ENCODE measurements at regions of chr12 and their contacts with region 1.

Region 1: GRCh38 chr12:109432841-109433304 is 44.2 kb downstream of the KCTD10 start:
- DNase-seq: peak; percentile 88 to 90 (median 89)
- H3K4me3 ChIP-seq: no peak overlapping the region
- H3K27ac ChIP-seq: no peak overlapping the region
- H3K4me1 ChIP-seq: peaks cover 0 to 5% (median 0%) of the 10 kb centered on the region in 3 donors
- H3K27me3 ChIP-seq: no peaks in the 10 kb centered on the region
- CTCF ChIP-seq: peak; percentile 78

Region 2: DNA sequence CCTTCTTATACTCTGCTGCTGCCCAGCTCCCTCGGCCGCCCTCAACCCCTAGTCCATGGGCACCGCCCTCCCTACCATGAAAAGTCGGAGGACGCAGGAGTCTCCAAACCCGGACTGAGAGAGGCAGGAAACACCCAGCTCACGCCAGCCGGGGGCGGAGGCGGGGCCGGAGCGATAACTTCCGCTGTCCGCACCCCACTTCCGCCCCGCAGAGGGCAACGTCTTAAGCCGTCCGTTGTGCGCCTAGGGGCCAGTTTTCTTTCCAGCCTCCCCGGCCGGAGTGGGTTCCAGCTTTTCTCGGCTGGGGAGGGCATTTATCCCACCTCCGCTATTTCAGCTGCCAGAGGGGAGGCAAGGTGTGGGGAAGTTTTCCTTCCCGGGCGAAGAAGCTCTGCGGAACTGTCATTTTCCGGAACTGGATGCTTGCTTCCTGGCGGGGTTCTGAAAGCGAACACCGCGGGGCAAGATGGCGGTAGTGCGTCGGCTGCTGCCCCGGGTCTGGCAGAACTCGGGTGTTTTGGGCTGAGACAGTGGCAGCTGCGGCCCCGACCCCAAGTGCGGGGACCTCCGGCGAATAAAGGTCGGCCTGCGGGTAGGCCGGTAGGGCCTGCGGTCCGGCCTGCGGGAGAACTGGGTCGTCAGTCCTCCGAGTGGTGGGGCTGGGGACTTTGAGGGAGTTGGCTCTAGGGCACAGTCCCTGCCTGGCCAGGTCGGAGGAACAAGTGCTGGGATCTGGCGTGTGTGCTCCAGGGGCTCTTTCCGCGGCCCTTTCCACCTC is 44.5 kb after region 1 on chr12 and contains the starts of genes KCTD10 and UBE3B:
- intact Hi-C with region 1: loop called (anchors 5 kb)
- DNase-seq: peak; percentile 89 to 96 (median 94)
- H3K4me3 ChIP-seq: peak within 1 kb of the TSS; percentile 99
- H3K27ac ChIP-seq: peak within 1 kb of the TSS; percentile 90 to 99
- H3K4me1 ChIP-seq: peaks cover 0 to 20% (median 9%) of the 10 kb centered on the region in 3 donors
- H3K27me3 ChIP-seq: no peaks in the 10 kb centered on the region
- CTCF ChIP-seq: peak; percentile 15
- total RNA-seq, gene KCTD10: 72.1 TPM
- total RNA-seq, gene UBE3B: 44.3 TPM

Region 3: GRCh38 chr12:110028323-110028722 is 595.5 kb after region 1 on chr12:
- intact Hi-C with region 1: no loop called
- DNase-seq: no peak
- H3K4me3 ChIP-seq: no peak overlapping the region
- H3K27ac ChIP-seq: no peak overlapping the region
- H3K4me1 ChIP-seq: no peaks in the 10 kb centered on the region
- H3K27me3 ChIP-seq: no peaks in the 10 kb centered on the region
- CTCF ChIP-seq: no peak

Region 4: DNA sequence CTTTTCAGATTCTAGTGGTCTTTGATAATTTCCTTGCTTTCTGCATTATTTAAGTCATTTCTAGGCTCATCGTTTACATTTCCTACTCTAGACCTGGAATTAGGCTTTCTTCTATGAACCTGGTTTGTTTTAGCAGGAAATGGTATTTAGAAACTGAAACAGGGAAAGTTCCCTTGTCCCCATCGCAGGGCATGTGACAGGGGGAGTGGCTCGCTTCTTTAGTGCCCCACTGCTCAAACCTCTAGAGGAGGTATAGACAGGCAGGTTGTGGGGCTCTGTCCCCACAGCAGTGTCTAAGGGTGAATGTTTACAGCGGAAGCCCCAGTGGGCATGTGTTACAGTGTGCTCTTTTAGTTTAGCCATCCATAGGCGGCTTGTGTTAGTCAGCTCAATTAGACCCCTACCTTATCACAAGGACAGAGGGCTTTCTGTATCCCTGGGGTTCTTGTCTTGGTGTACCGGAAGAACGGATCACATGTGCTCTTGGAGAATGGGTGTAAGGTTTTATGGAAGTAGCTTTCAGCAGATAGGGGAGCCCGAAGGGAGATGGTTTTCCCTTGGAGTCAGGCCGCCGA is 716.3 kb after region 1 on chr12:
- intact Hi-C with region 1: no loop called
- DNase-seq: no peak
- H3K4me3 ChIP-seq: no peak overlapping the region
- H3K27ac ChIP-seq: no peak overlapping the region
- H3K4me1 ChIP-seq: no peaks in the 10 kb centered on the region
- H3K27me3 ChIP-seq: no peaks in the 10 kb centered on the region
- CTCF ChIP-seq: no peak

Measured in kidney (tissue), 22 donors.